ENCODE measurements at regions of chr4 and their contacts with region 1.

Region 1: DNA sequence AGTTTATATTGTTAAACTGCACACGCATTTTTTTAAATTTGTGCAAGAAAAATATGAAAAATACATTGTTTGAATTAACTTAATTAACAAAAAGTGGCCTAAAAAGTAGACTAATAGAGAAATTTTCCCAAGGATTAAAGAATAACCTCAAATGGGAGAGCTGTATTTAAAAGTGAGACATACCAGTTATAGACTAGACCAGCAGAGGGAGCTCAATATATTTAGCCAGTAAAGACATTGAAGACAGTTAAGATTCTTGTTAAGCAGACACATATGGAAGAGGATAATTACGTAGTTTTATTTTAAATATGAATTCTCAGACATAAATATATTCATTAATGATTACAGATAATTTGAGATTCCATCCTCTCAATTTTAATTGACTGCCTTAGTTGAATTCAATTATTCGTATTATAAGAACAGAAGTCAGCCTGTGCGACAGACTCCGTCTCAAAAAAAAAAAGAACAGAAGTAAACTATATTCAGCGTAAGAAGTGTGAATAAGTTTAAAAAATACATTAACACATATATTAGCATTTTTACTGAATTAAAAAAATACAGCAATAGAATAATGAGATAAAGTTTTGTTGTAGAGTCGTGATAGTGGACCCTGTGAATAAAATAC is 64.8 kb downstream of the GLRA3 start:
- DNase-seq: no peak
- ATAC-seq: peak; percentile 81
- H3K4me3 Mint-ChIP-seq: no peak overlapping the region
- H3K27ac Mint-ChIP-seq: no peak overlapping the region
- H3K4me1 Mint-ChIP-seq: peaks cover 5% of the 10 kb centered on the region
- H3K27me3 Mint-ChIP-seq: no peaks in the 10 kb centered on the region
- CTCF ChIP-seq: peak; percentile 36

Region 2: DNA sequence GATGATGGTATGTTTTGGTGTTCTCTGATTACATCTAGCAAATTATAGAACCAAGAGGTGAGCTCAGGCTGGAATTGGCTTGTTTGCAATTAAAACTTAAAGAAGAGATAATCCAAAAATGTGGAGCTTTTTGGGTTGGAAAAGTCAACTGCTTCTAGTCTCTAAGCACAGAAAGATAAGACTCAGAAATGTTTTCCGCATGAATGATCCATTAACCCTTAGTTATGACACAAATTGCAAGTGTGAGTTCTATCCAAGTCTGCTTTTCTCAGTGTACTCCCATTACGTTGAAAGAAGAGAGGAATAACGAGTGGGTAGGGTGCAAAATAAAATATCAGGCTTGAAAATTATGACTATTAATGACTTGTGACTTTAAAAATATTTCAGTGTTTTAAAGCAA is 280.4 kb before region 1 on chr4:
- CTCF ChIA-PET with region 1: no interaction called
- POLR2A ChIA-PET with region 1: no interaction called
- DNase-seq: no peak
- ATAC-seq: no peak
- H3K4me3 Mint-ChIP-seq: no peak overlapping the region
- H3K27ac Mint-ChIP-seq: no peak overlapping the region
- H3K4me1 Mint-ChIP-seq: no peaks in the 10 kb centered on the region
- H3K27me3 Mint-ChIP-seq: no peaks in the 10 kb centered on the region
- CTCF ChIP-seq: no peak

Region 3: DNA sequence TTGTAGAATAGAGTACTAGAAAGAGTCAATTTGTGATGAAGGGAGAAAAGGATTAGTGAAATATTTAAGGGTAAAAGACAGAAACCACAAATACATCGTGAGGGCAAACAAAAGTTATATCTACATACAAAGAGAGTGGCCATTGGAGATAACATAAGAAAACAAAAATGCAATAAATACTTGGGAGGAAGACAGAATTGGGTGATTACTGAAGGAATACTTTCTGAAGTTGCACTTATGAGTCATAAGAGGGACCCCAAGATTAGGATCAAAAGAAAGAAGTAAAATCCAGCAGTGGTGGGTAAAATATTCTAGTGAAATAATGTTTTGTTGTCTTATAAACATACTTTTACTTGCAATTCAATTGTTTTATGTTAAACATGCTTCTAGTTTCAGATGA is 11.1 kb after region 1 on chr4:
- CTCF ChIA-PET with region 1: interaction called, 16 read pairs
- POLR2A ChIA-PET with region 1: no interaction called
- DNase-seq: no peak
- ATAC-seq: no peak
- H3K4me3 Mint-ChIP-seq: no peak overlapping the region
- H3K27ac Mint-ChIP-seq: no peak overlapping the region; the same call in 1 of the 2 replicates
- H3K4me1 Mint-ChIP-seq: peaks cover 22% of the 10 kb centered on the region
- H3K27me3 Mint-ChIP-seq: no peaks in the 10 kb centered on the region; the same call in 1 of the 2 replicates
- CTCF ChIP-seq: no peak

Region 4: GRCh38 chr4:174828845-174829701 is 64.9 kb after region 1 on chr4 and contains the start of gene GLRA3:
- CTCF ChIA-PET with region 1: interaction called, 15 read pairs
- POLR2A ChIA-PET with region 1: no interaction called
- DNase-seq: peak; percentile 99
- ATAC-seq: peak; percentile 98
- H3K4me3 Mint-ChIP-seq: peak within 1 kb of the TSS; percentile 75
- H3K27ac Mint-ChIP-seq: peak within 1 kb of the TSS; percentile 97
- H3K4me1 Mint-ChIP-seq: peaks cover 21% of the 10 kb centered on the region
- H3K27me3 Mint-ChIP-seq: no peaks in the 10 kb centered on the region; the same call in 1 of the 2 replicates
- CTCF ChIP-seq: no peak
- total RNA-seq, gene GLRA3: 0.07 to 0.15 TPM (median 0.11 TPM) in 3 replicates

Region 5: DNA sequence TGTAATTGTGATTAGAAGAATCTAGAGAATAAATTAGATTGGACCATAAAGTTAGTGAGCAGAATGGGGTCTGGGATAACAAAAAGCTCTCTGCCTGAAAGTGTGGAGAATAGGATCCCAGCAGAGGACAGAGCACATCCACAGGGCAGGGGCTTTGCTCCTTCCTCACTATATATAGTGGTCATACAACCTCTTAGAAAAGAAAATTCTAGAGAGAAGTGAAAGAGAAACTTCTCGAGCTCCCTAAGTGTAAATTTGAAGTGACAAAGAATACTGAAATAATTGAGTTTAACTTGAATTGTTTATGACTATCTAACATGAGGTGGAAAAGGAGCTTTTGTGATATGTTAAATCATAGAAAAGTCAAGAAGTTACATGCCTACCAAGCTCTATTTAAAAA is 168.9 kb after region 1 on chr4:
- CTCF ChIA-PET with region 1: no interaction called
- POLR2A ChIA-PET with region 1: no interaction called
- DNase-seq: no peak
- ATAC-seq: no peak
- H3K4me3 Mint-ChIP-seq: no peak overlapping the region
- H3K27ac Mint-ChIP-seq: no peak overlapping the region
- H3K4me1 Mint-ChIP-seq: peaks cover 16% of the 10 kb centered on the region
- H3K27me3 Mint-ChIP-seq: no peaks in the 10 kb centered on the region
- CTCF ChIP-seq: no peak